Right ventricle myocardium superior (tissue), 1 donor: ENCODE measurements at regions of chr19 and their contacts with region 1.

Region 1: DNA sequence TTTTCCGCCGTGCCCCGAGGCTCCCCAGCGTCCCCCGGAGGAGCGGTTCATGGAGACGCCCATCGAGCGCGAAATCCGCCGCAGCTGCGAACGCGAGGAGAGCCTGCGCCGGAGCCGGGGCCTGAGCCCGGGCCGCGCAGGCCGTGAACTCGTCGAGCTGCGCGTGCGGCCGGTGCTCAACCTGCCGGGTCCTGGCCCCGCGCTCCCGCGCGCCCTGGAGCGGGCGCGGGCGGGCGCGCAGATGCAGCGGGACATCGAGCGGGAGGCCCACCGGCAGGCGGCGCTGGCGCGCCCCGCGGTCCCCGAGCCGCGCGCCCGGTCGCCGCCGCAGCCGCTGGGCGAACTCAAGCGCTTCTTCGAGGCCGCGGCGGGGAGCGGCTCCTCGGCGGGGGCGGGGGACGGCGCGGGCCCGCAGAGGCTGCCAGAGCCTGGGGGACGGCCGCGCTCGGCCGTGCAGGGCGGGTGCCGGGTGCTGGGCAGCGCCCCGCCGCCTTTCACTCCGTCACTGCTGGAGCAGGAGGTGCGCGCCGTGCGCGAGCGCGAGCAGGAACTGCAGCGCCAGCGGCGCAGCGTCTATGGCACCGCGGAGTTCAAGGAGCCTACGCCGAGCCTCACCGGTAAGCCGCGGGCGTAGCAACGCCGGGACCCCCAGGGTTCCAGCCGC is 807 bp downstream of the MISP3 start:
- DNase-seq: peak; percentile 87
- ATAC-seq: peak; percentile 38

Region 2: GRCh38 chr19:13880059-13881043 is 193.0 kb before region 1 on chr19:
- intact Hi-C with region 1: loop called (anchors 5 kb)
- DNase-seq: peak; percentile 99
- ATAC-seq: peak; percentile 97

Region 3: DNA sequence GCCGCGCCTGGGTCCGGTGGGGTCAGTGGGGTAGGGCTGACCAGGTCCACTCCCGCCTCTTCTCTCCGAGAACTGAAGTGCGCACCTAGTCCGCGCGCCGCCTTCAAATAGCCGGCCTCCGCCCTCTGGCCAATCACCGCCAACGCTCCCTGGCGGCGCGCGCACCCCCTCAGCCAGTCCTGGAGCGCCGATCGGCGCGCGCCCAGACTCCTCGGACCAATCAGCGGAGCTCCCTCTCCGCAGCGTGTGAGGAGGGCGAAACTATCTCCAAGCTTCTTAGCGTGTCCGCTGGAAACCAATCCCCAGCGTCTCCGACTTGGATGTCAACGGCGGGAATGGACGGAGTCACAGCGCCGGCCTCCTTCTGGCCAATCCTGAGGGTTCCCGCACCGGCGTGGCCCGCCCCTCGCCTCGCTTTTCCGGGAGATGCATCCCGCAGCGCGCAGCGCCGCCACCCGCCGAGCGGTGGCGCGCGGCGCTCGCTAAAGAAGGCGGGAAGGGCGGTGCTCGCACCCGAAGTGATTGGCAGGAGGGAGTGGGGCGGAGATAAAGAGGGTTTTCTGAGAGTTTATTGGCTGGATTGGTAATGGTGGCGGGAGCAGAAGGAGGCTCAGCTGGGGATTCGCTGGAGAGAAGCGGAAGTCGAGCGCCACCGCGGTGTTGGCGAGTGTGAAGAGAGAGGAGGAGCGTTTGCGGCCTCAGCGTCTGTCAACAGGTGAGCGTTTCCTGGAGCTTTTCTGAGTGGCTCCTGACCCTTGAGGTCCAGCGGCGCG is 63.3 kb after region 1 on chr19 and contains the start of gene ASF1B:
- intact Hi-C with region 1: loop called (anchors 10 kb)
- DNase-seq: peak; percentile 99
- ATAC-seq: peak; percentile 93
- total RNA-seq, gene ASF1B: 1.00 TPM